Mammary epithelial cell (primary cell): ENCODE measurements at regions of chrX and their contacts with region 1.

Region 1: DNA sequence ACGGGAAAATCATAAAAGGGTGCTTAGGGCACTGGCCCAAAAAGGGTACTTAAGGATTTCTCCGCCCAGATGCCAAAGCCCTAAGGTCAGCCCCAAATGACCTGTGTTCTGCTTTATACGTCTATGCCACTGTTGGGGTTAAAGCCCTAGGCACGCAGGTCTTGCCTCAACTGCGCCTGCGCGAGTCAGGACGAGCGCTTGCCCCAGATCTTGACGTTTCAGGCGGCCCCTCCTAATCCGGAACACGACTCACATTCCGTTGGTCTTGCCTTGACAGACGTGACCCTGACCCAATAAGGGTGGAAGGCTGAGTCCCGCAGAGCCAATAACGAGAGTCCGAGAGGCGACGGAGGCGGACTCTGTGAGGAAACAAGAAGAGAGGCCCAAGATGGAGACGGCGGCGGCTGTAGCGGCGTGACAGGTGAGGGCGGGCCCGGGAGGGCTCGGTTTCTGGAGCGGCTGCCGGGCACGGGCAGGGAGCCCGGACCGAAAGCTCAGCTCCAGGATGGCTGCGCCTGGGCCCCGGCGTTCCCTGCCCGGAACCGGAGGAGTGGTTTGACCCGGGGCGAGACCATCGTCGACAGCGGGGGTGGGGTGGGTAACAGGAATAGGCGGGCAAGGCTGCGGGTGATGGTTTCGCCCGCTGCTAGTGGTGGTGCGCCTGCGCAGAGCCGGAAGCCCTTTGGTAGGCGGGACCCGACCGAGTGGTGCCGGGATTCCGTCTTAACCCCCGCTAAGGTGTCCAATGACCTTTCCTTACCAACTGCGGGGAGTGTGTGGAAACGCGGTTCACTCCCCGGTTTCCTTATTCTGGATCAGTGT is at the start of gene ARAF:
- DNase-seq: peak; percentile 98
- H3K4me3 ChIP-seq: peak within 1 kb of the TSS; percentile 72 to 76 (median 72)
- H3K27ac ChIP-seq: peak within 1 kb of the TSS; percentile 54
- H3K4me1 ChIP-seq: peaks cover 8% of the 10 kb centered on the region
- H3K27me3 ChIP-seq: no peaks in the 10 kb centered on the region
- CTCF ChIP-seq: no peak
- total RNA-seq, gene ARAF: 15.8 to 48.6 TPM

Region 2: DNA sequence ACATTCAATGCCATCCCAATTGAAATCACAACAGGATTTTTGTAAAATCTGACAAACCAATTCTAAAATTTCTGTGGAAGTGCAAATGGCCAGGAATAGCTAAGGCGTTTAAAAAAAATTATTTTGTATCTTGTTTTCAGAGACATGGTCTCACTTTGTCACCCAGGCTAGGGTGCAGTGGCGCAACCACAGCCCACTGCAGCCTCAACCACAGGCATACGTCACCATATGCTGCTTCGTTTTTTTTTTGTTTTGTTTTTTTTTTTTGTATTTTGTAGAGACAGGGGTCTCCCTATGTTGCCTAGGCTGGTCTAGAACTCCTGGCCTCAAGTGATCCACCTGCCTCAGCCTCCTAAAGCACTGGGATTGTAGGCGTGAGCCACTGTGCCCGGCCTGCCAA is 102.5 kb before region 1 on chrX:
- CTCF ChIA-PET with region 1: no interaction called
- dilution Hi-C with region 1: no loop called
- in situ Hi-C with region 1: no loop called
- intact Hi-C with region 1: no loop called
- DNase-seq: no peak
- H3K4me3 ChIP-seq: no peak overlapping the region
- H3K27ac ChIP-seq: no peak overlapping the region
- H3K4me1 ChIP-seq: no peaks in the 10 kb centered on the region
- H3K27me3 ChIP-seq: no peaks in the 10 kb centered on the region
- CTCF ChIP-seq: no peak

Region 3: DNA sequence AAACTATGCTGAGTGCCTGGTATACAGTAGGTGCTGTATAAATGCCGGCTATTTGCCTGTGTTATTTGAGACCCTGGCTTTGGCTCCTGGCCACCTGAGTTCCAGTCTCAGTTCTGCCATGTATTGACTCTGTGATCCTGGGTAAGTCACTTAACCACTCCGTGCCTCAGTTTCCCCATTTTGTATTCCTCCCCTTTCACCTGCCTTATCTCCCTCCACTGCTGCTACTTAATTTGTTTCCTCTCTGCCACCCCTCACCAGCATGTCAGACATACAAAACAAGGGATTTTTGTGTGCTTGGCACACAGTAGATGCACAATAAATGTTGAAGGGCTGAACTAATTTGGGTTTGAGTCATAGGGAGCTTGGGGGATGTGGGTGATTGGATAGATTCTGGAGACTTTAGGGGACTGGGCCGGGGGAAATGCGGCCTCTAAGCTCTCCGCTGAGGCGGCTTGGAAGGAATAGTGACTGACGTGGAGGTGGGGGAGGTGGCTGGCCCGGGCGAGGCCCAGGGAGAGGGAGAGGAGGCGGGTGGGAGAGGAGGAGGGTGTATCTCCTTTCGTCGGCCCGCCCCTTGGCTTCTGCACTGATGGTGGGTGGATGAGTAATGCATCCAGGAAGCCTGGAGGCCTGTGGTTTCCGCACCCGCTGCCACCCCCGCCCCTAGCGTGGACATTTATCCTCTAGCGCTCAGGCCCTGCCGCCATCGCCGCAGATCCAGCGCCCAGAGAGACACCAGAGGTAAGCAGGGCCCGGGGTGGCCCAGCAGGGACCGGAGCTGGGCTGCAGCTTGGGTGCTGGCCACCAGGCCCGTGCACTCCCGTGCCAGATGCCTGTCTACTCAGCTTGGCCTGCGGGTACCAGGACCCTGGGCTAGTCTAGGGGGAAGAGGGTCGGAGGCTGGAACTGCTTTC is 20.9 kb after region 1 on chrX and contains the start of gene TIMP1:
- CTCF ChIA-PET with region 1: no interaction called
- dilution Hi-C with region 1: no loop called
- in situ Hi-C with region 1: no loop called
- intact Hi-C with region 1: loop called (anchors 2 kb)
- DNase-seq: peak; percentile 85
- H3K4me3 ChIP-seq: peak within 1 kb of the TSS; percentile 57 to 80 (median 61)
- H3K27ac ChIP-seq: peak within 1 kb of the TSS; percentile 32
- H3K4me1 ChIP-seq: peaks cover 17% of the 10 kb centered on the region
- H3K27me3 ChIP-seq: no peaks in the 10 kb centered on the region
- CTCF ChIP-seq: no peak
- total RNA-seq, gene TIMP1: 170 to 219 TPM

Region 4: GRCh38 chrX:47644557-47645091 is 83.6 kb after region 1 on chrX:
- CTCF ChIA-PET with region 1: no interaction called
- dilution Hi-C with region 1: no loop called
- in situ Hi-C with region 1: loop called in 1 of 2 experiments (anchors 10 kb)
- intact Hi-C with region 1: loop called (anchors 1 kb)
- DNase-seq: peak; percentile 16
- H3K4me3 ChIP-seq: no peak overlapping the region
- H3K27ac ChIP-seq: no peak overlapping the region
- H3K4me1 ChIP-seq: peaks cover 8% of the 10 kb centered on the region
- H3K27me3 ChIP-seq: no peaks in the 10 kb centered on the region
- CTCF ChIP-seq: peak; percentile 35 to 49

Region 5: GRCh38 chrX:47658684-47659515 is 97.9 kb after region 1 on chrX and contains the start of gene UXT:
- CTCF ChIA-PET with region 1: no interaction called
- dilution Hi-C with region 1: no loop called
- in situ Hi-C with region 1: no loop called
- intact Hi-C with region 1: loop called (anchors 1 kb)
- DNase-seq: peak; percentile 91
- H3K4me3 ChIP-seq: peak within 1 kb of the TSS; percentile 60 to 83 (median 71)
- H3K27ac ChIP-seq: peak within 1 kb of the TSS; percentile 94
- H3K4me1 ChIP-seq: peaks cover 8% of the 10 kb centered on the region
- H3K27me3 ChIP-seq: no peaks in the 10 kb centered on the region
- CTCF ChIP-seq: no peak
- total RNA-seq, gene UXT: 56.7 to 76.4 TPM

Region 6: DNA sequence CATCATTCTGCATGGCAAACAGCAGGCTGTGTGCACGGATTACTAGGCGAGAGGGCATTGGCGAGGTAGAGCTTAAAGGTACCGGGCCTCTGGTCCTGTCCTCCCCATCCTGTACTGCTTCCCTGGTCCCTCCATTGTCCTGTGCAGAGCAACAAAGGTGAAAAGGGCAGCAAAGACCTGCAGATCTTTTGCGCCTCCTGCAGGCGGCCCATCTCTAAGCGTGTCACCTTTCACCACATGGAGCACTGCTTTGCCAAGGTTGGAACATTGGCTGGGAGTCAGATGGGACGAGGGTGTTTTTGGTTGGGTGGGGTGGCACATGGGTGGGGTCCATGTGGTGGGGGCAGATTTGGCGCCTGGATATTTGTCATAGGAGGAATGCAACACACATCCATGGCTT is 162.6 kb after region 1 on chrX:
- CTCF ChIA-PET with region 1: no interaction called
- dilution Hi-C with region 1: no loop called
- in situ Hi-C with region 1: no loop called
- intact Hi-C with region 1: loop called (anchors 5 kb)
- DNase-seq: no peak
- H3K4me3 ChIP-seq: no peak overlapping the region
- H3K27ac ChIP-seq: no peak overlapping the region
- H3K4me1 ChIP-seq: no peaks in the 10 kb centered on the region
- H3K27me3 ChIP-seq: no peaks in the 10 kb centered on the region
- CTCF ChIP-seq: no peak

Region 7: GRCh38 chrX:47751670-47752069 is 190.6 kb after region 1 on chrX:
- CTCF ChIA-PET with region 1: no interaction called
- dilution Hi-C with region 1: no loop called
- in situ Hi-C with region 1: no loop called
- intact Hi-C with region 1: loop called (anchors 1 kb)
- DNase-seq: peak; percentile 26
- H3K4me3 ChIP-seq: no peak overlapping the region
- H3K27ac ChIP-seq: no peak overlapping the region
- H3K4me1 ChIP-seq: no peaks in the 10 kb centered on the region
- H3K27me3 ChIP-seq: peaks cover 2% of the 10 kb centered on the region
- CTCF ChIP-seq: peak; percentile 48 to 75

Region 8: DNA sequence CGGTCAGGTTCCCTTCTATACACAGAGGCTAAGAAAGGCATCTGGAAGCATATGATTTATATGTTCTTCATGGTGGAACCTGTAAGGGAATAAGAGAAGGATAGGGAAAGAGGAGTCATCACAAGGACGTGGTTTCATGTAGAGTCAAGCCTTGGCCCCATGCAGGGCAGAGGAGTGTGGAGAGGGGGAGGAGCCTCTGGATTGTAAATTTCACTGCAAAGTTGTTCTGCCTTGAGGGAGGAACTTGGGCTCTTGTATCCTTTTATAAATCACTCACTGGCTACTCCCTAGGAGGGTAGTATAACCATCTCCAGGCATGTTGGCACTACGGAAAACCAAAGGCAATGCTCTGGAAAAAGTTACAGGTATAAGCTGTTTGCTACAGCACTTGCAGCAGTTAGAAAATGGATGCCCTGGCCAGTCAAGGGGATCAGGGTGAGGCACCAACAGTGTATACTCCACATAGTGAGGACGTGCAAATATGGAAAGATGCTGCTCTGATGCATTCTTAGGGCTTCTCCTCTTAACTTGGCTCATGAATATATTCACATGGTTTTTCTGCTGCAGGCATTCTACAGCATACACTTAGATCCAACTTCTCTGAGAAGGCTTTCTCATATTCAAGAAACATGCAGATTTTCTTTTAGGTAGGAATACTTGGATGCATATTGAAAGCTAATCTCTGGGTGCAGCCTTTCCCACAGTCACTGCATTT is 215.4 kb after region 1 on chrX:
- CTCF ChIA-PET with region 1: no interaction called
- dilution Hi-C with region 1: no loop called
- in situ Hi-C with region 1: no loop called
- intact Hi-C with region 1: no loop called
- DNase-seq: no peak
- H3K4me3 ChIP-seq: no peak overlapping the region
- H3K27ac ChIP-seq: no peak overlapping the region
- H3K4me1 ChIP-seq: no peaks in the 10 kb centered on the region
- H3K27me3 ChIP-seq: no peaks in the 10 kb centered on the region
- CTCF ChIP-seq: no peak

Region 9: GRCh38 chrX:47836164-47837072 is 275.4 kb after region 1 on chrX and contains the start of gene ZNF81:
- CTCF ChIA-PET with region 1: no interaction called
- dilution Hi-C with region 1: no loop called
- in situ Hi-C with region 1: no loop called
- intact Hi-C with region 1: loop called (anchors 5 kb)
- DNase-seq: peak; percentile 94
- H3K4me3 ChIP-seq: peak within 1 kb of the TSS; percentile 55 to 59 (median 56)
- H3K27ac ChIP-seq: peak within 1 kb of the TSS; percentile 59
- H3K4me1 ChIP-seq: no peaks in the 10 kb centered on the region
- H3K27me3 ChIP-seq: no peaks in the 10 kb centered on the region
- CTCF ChIP-seq: no peak
- total RNA-seq, gene ZNF81: 6.1 to 7.8 TPM